CD8-positive, alpha-beta memory T cell (primary cell): ENCODE measurements at regions of chr2 and their contacts with region 1.

Region 1: DNA sequence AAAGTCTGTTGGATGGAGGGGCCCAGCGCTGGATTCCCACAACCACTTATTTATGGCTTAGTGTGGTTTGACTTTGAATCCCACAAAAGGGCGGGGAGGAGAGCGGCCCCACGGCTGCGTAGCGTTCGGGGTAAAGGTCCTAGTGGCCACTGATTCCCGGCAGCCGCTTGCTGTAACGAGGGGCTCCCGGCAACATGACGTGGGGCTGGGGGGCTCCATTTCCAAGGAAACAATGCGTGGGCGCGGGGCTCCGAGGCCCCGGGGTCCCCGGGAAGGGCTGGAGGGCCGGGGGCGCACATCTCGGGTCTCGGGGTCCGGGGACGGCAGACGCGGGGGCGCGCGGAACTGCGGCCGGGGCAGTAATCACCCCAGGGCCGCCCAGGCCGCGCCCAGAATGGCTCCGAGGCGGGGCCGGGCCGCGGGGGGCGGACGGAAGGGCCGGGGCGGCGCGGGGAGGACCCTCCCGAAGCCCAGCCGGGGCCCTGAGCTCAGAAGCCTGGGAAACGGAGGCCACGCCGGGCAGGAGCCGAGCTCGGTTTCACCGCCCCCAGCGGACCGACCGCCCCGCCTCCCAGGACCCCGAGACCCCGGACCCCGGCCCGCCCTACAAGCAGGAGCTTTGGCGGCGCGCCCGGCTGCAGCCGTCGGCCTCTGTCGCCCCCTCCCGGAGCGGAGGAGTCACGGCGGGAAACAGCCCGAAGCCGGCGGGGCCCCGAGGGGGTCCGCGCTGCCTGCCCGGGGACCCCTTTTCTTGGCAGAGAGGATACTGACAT is 11.9 kb upstream of the MLPH start:
- DNase-seq: peak; percentile 61 to 78 (median 67)
- H3K4me3 ChIP-seq: peak overlapping the region; percentile 56
- H3K4me3 Mint-ChIP-seq: peak overlapping the region; percentile 82 to 95 (median 87)
- H3K27ac ChIP-seq: no peak overlapping the region
- H3K27ac Mint-ChIP-seq: peak overlapping the region in 6 of 8 donors; percentile 52 to 91 (median 78)
- H3K4me1 ChIP-seq: peaks cover 11% of the 10 kb centered on the region
- H3K4me1 Mint-ChIP-seq: peaks cover 4 to 11% (median 5%) of the 10 kb centered on the region in 3 donors
- H3K27me3 ChIP-seq: peaks cover 10% of the 10 kb centered on the region
- H3K27me3 Mint-ChIP-seq: peaks cover 7 to 26% of the 10 kb centered on the region in 2 donors

Region 2: GRCh38 chr2:237154082-237154638 is 321.0 kb before region 1 on chr2:
- CTCF ChIA-PET with region 1: interaction called, 15 read pairs
- POLR2A ChIA-PET with region 1: no interaction called
- DNase-seq: peak; percentile 12 to 65 (median 35)
- H3K4me3 ChIP-seq: no peak overlapping the region
- H3K4me3 Mint-ChIP-seq: no peak overlapping the region
- H3K27ac ChIP-seq: no peak overlapping the region
- H3K27ac Mint-ChIP-seq: no peak overlapping the region
- H3K4me1 ChIP-seq: no peaks in the 10 kb centered on the region
- H3K4me1 Mint-ChIP-seq: no peaks in the 10 kb centered on the region
- H3K27me3 ChIP-seq: no peaks in the 10 kb centered on the region
- H3K27me3 Mint-ChIP-seq: peaks cover 5% of the 10 kb centered on the region in 2 donors

Region 3: DNA sequence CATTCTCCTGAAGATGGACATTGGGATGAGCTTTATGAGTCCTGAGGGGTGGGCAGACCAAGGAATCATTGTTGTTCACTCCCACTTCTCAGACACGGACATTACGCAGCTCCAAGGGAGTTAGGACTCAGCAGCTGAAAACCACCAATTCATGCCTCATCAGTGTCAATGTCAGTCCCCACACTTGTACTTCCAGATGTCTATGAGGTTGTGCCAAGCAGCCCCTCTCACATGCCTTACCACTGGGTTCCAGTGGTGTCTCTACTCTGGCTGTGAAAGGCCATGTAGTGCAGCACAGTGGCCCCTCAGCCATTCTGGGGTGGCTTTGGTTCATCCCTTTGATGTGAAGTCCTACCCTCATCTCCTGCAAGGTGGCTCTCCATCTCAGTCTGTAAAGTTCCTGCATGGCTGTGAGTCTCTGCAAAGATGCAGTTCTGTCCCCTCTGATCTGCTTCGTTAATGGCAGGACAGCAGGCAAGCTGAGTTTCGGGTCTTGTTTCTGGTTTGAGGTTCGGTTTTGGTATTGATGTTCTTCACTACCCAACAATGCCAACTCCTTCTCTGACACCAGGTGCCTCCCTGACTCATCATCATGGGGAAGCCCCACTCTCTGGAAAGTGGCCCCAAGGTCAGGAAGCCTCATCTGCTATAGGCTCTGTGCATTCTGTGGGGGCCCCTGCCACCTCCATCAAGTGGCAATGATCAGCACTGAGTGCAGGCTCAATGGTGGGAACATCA is 47.2 kb before region 1 on chr2:
- CTCF ChIA-PET with region 1: interaction called, 35 read pairs
- POLR2A ChIA-PET with region 1: no interaction called
- DNase-seq: peak in 1 of 5 donors; percentile 70
- H3K4me3 ChIP-seq: peak overlapping the region; percentile 11
- H3K4me3 Mint-ChIP-seq: peak overlapping the region in 3 of 7 donors; percentile 12 to 53 (median 26)
- H3K27ac ChIP-seq: no peak overlapping the region
- H3K27ac Mint-ChIP-seq: peak overlapping the region in 7 of 8 donors; percentile 48 to 90 (median 61)
- H3K4me1 ChIP-seq: peaks cover 46% of the 10 kb centered on the region
- H3K4me1 Mint-ChIP-seq: peaks cover 47 to 61% (median 60%) of the 10 kb centered on the region in 3 donors
- H3K27me3 ChIP-seq: no peaks in the 10 kb centered on the region
- H3K27me3 Mint-ChIP-seq: peaks cover 0 to 4% of the 10 kb centered on the region in 2 donors

Region 4: DNA sequence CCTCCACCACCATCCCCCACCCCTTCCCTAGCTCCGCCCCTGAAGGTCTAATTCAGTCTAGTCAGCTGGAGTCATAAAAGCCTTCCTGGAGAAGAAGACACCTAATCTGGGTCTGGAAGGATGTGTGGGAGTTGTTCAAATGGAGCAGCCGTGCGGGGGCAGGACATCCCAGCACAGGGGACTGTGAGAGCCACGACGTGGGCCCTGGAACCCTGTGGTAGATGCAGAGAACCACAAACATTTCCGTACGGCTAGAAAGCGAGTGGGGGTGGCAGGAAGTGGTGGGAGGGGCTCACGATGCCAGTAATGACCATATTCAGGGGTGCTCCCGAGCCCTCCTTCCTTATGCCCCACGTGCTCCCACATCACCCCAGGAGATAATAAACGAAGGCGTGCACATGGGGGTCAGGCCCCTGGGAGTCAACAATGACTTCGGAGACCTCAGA is 40.2 kb before region 1 on chr2:
- CTCF ChIA-PET with region 1: interaction called, 35 read pairs
- POLR2A ChIA-PET with region 1: no interaction called
- DNase-seq: peak; percentile 42 to 81 (median 71)
- H3K4me3 ChIP-seq: peak overlapping the region; percentile 62
- H3K4me3 Mint-ChIP-seq: peak overlapping the region; percentile 55 to 91 (median 78)
- H3K27ac ChIP-seq: no peak overlapping the region
- H3K27ac Mint-ChIP-seq: peak overlapping the region; percentile 48 to 98 (median 90)
- H3K4me1 ChIP-seq: peaks cover 75% of the 10 kb centered on the region
- H3K4me1 Mint-ChIP-seq: peaks cover 60 to 74% (median 67%) of the 10 kb centered on the region in 3 donors
- H3K27me3 ChIP-seq: no peaks in the 10 kb centered on the region
- H3K27me3 Mint-ChIP-seq: peaks cover 0 to 1% of the 10 kb centered on the region in 2 donors